Activated T-helper 1 cell treated with anti-CD3 and anti-CD28 coated beads, Interleukin-12 subunit alpha, Interleukin-12 subunit beta, Interleukin-2, Interleukin-4 antibody, amounts not matched to agents 30 ng/mL and 10 ng/mL and 1 ng/mL, durations not matched to agents 14 hours and 24 hours and 36 hours (primary cell): ENCODE measurements at regions of chr10 and their contacts with region 1.

Region 1: DNA sequence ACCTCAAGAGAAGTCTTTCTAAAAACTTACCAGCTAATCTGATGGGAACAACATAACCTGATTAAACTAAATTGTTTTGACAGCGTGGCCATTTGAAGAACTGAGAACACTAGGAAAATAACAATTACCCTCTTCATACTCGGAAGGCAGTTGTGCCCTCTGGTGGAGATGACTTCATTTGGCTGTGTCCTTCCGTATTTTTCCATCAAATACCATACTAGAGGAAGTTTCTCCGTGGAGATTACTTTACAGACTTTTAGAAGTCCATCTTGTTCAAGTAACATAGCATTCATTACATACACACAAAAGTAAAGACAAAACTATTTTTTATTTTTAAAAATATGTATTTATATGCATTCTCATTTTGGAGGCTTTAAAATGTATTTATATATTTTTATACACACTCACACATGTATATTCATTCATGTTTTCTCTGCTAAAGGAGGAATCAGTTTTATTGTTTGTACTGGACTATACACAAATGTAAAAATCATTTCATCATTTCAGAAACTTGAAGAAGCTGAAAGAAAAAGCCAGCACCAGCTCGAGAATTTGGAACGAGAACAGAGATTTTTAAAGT is 25.2 kb downstream of the SMNDC1 start:
- DNase-seq: peak; percentile 18
- H3K4me3 Mint-ChIP-seq: no peak overlapping the region
- H3K27ac Mint-ChIP-seq: no peak overlapping the region
- H3K4me1 Mint-ChIP-seq: peaks cover 20% of the 10 kb centered on the region
- H3K27me3 Mint-ChIP-seq: peaks cover 14% of the 10 kb centered on the region

Region 2: GRCh38 chr10:109978481-109978880 is 301.0 kb before region 1 on chr10:
- intact Hi-C with region 1: loop called (anchors 1 kb)
- DNase-seq: peak; percentile 26
- H3K4me3 Mint-ChIP-seq: no peak overlapping the region
- H3K27ac Mint-ChIP-seq: no peak overlapping the region
- H3K4me1 Mint-ChIP-seq: peaks cover 8% of the 10 kb centered on the region
- H3K27me3 Mint-ChIP-seq: peaks cover 7% of the 10 kb centered on the region

Region 3: DNA sequence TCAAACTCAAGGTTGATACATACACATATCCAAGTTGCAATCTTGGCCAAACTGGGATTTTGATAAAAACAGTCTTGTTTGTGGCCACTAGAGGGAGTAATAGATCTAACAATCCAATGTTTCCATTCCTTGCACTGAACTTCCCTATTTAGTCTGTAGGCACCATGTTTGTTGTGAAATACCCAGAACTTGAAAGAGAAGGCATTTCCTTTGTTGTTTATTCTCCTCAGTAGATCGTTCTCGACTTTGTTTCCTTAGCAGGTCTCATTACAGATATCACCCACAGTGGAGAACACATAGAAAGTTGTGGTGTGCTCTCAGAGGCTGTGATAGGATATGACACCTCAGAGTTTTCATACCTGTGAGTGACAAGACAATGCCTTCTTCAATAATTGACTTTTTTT is 142.4 kb before region 1 on chr10:
- intact Hi-C with region 1: loop called (anchors 1 kb)
- DNase-seq: no peak
- H3K4me3 Mint-ChIP-seq: no peak overlapping the region
- H3K27ac Mint-ChIP-seq: peak overlapping the region; percentile 1
- H3K4me1 Mint-ChIP-seq: peaks cover 33% of the 10 kb centered on the region
- H3K27me3 Mint-ChIP-seq: no peaks in the 10 kb centered on the region

Region 4: DNA sequence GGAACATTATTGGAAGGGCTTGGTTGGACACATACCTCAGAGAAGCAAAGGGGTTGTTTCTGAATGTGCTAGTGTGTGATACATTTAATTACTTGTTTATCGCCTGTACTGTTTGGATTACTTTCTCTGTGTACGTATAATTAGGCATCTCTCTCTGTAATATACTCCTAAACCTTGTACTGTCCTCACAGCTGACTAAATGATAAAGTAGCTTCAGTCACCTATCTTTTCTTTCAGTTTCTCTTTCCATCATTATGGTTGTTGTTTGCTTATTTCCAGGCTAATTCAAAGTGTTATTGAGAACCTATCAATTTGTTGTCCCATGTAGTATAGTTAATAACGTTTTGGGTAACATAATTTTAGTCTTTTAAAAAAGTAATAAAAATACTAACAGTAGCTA is 38.1 kb before region 1 on chr10:
- intact Hi-C with region 1: loop called (anchors 5 kb)
- DNase-seq: no peak
- H3K4me3 Mint-ChIP-seq: no peak overlapping the region
- H3K27ac Mint-ChIP-seq: no peak overlapping the region
- H3K4me1 Mint-ChIP-seq: peaks cover 18% of the 10 kb centered on the region
- H3K27me3 Mint-ChIP-seq: peaks cover 20% of the 10 kb centered on the region

Region 5: GRCh38 chr10:110671788-110672579 is 392.5 kb after region 1 on chr10:
- intact Hi-C with region 1: no loop called
- DNase-seq: peak; percentile 44
- H3K4me3 Mint-ChIP-seq: peak overlapping the region; percentile 81
- H3K27ac Mint-ChIP-seq: peak overlapping the region; percentile 36
- H3K4me1 Mint-ChIP-seq: peaks cover 5% of the 10 kb centered on the region
- H3K27me3 Mint-ChIP-seq: peaks cover 54% of the 10 kb centered on the region

Region 6: DNA sequence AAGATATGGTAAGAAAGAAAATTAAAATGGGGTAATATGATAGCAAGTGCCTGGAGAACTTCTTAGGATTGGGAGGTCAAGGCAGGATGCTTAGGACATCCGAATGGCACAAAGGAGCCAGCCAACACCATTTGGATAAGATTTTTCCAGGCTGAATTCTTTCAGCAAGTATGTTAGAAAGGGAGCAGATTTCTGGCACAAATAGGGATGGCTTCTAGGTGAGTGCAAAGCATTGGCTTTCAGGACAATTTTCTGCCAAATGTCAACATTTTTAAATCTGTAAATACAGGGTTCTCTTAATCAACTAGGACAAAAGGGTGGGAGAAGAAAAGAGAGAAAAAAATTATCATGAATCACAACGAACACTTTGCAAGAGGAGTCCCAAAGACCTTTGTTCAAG is 1495.0 kb after region 1 on chr10:
- intact Hi-C with region 1: no loop called
- DNase-seq: no peak
- H3K4me3 Mint-ChIP-seq: no peak overlapping the region
- H3K27ac Mint-ChIP-seq: no peak overlapping the region
- H3K4me1 Mint-ChIP-seq: no peaks in the 10 kb centered on the region
- H3K27me3 Mint-ChIP-seq: no peaks in the 10 kb centered on the region